ENCODE measurements at regions of chr14 and their contacts with region 1.

Region 1: GRCh38 chr14:68248481-68249255 is 429.1 kb downstream of the RAD51B start:
- DNase-seq: no peak
- H3K4me3 ChIP-seq: no peak overlapping the region
- H3K27ac ChIP-seq: peak overlapping the region; percentile 69 to 73
- H3K4me1 ChIP-seq: peaks cover 7% of the 10 kb centered on the region
- H3K27me3 ChIP-seq: no peaks in the 10 kb centered on the region
- CTCF ChIP-seq: peak; percentile 25 to 79 (median 70)
- POLR2A ChIP-seq: no peak

Region 2: DNA sequence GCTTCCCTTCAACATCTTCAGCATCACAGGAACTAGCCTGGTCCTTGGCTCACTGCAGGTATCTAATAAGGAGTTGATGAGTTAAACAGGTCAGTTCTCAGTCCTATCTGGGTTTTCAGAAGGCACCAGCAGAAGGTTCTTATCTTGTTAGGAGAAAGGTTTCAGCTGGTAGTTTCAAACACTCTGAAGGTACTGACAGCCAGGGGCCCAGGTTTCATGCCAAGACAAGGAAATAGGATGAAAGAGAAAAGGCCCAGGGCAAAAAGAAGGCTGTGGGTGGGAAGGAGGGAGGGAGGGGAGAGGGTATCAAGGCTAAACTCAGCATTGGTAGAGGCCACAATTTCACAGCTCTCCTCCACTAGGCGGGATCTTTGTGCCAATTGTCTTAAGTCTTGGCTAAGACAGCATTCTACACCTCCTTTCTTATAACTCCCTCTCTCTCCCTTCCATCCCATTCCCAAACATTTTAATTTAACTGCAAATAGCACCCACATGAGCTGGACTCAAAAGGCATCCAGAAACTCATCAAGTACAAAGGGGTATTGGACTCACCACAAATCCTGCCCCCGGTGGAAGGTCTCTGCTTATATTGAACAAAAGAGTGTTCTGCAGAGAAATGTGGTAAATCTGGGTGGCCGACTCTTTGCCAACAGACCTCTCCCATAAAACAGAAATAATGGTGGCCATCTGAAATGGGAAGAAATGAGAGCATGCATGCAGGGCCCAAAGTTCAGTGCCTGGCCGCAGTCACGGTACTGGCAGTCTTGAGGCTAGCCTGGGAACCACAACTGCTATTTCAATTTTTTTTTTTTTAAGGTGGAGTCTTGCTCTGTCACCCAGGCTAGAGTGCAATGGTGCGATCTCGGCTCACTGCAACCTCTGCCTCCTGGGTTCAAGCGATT is 781.2 kb before region 1 on chr14:
- intact Hi-C with region 1: no loop called
- DNase-seq: no peak
- H3K4me3 ChIP-seq: no peak overlapping the region
- H3K27ac ChIP-seq: no peak overlapping the region
- H3K4me1 ChIP-seq: no peaks in the 10 kb centered on the region
- H3K27me3 ChIP-seq: no peaks in the 10 kb centered on the region
- CTCF ChIP-seq: no peak
- POLR2A ChIP-seq: no peak

Region 3: GRCh38 chr14:68140111-68140741 is 108.4 kb before region 1 on chr14:
- intact Hi-C with region 1: loop called (anchors 10 kb)
- DNase-seq: peak; percentile 89
- H3K4me3 ChIP-seq: no peak overlapping the region
- H3K27ac ChIP-seq: peak overlapping the region; percentile 76 to 77
- H3K4me1 ChIP-seq: peaks cover 10% of the 10 kb centered on the region
- H3K27me3 ChIP-seq: no peaks in the 10 kb centered on the region
- CTCF ChIP-seq: no peak
- POLR2A ChIP-seq: peak; percentile 21

Region 4: GRCh38 chr14:68401855-68402254 is 153.2 kb after region 1 on chr14:
- intact Hi-C with region 1: no loop called
- DNase-seq: no peak
- H3K4me3 ChIP-seq: no peak overlapping the region
- H3K27ac ChIP-seq: no peak overlapping the region
- H3K4me1 ChIP-seq: no peaks in the 10 kb centered on the region
- H3K27me3 ChIP-seq: no peaks in the 10 kb centered on the region
- CTCF ChIP-seq: no peak
- POLR2A ChIP-seq: no peak

Region 5: DNA sequence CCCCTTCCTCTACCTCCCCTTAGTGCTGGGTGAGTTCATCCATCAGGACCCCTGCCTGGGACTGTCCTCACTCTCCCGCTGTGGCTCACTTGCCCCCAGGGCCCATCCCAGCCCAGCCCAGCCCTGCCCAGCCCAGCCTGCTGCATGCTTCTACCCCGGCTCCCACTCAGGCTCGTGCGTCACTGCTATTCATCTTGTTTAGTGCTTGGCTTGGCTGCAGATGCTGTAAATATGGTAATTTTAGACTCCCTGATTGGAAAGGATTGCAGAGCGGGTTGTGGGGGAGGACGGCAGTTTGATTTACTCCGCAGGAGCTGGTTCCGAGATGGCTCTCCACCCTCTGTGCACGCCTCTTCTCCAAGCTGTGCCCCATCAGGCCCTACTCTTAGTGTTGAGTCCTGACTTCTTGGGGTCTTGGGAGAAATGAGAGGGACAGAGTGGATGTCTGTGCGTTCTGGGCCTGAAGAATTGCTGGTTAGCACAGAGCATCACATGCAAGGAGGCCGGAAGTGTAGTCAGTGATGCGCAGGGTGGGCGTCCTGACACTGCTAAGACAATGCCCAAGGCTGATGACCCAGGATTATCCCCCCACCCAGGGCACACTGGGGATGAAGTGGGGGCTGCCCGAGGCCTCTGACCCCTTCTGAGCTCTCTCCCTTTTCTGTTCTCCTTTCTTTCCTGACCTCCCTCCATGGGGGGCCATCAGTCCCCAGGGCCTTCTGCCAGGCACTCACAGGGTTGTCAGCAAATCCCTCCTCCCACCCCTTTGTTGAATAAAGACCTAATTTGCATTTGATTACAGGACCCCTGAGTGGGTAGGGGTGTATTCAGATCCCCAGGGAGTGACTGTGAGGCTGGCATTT is 299.8 kb after region 1 on chr14:
- intact Hi-C with region 1: loop called (anchors 5 kb)
- DNase-seq: peak; percentile 84
- H3K4me3 ChIP-seq: no peak overlapping the region
- H3K27ac ChIP-seq: peak overlapping the region; percentile 81 to 84
- H3K4me1 ChIP-seq: peaks cover 39% of the 10 kb centered on the region
- H3K27me3 ChIP-seq: no peaks in the 10 kb centered on the region
- CTCF ChIP-seq: no peak
- POLR2A ChIP-seq: peak; percentile 59

Region 6: DNA sequence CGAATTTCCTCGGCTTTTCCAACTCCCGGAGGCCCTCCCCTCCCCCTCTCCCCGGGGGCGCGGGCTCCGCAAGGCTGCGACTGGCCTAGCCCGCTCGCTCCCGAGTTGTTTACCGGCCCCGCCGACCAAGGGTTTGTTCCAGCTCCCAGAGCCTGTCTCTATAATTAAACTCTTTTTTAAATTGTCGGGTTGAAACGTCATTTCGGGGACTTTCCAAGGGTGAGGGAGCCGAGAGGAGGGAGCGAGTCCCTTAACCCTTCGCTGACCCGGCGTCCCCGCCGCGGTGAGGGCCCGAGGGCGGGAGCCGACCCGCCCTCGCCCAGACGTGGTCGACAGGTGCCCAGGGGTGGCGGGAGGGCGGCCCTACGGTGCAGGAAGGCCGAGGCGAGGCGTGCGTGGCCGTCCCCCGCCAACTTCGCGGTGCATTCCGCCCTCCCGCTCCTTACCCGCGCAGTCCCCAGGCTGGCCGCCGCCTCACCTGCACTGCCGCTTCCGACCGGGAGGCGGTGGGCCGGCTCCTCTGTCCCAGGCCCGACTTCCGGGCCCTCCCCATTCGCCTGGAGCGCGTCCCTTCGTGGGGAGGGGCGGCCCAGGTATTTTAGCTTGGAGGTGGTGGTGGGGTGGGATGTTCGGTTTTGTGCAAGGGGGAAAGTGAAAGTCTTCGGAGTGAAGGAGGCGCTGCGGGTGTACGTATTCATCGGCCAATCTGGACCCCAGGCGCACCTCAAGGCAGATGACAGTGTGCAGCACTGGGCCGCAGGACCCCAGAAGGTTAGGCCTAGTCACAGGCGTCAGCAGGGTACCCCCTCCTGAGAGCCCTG is 547.1 kb after region 1 on chr14:
- intact Hi-C with region 1: loop called (anchors 2 kb)
- DNase-seq: peak; percentile 78
- H3K4me3 ChIP-seq: peak overlapping the region; percentile 86 to 94
- H3K27ac ChIP-seq: peak overlapping the region; percentile 99 to 100
- H3K4me1 ChIP-seq: no peaks in the 10 kb centered on the region
- H3K27me3 ChIP-seq: no peaks in the 10 kb centered on the region
- CTCF ChIP-seq: peak; percentile 76 to 98 (median 90)
- POLR2A ChIP-seq: peak; percentile 77

Measured in prostate gland (tissue), 2 donors.